Endothelial cell of umbilical vein (primary cell): ENCODE measurements at regions of chr5 and their contacts with region 1.

Region 1: DNA sequence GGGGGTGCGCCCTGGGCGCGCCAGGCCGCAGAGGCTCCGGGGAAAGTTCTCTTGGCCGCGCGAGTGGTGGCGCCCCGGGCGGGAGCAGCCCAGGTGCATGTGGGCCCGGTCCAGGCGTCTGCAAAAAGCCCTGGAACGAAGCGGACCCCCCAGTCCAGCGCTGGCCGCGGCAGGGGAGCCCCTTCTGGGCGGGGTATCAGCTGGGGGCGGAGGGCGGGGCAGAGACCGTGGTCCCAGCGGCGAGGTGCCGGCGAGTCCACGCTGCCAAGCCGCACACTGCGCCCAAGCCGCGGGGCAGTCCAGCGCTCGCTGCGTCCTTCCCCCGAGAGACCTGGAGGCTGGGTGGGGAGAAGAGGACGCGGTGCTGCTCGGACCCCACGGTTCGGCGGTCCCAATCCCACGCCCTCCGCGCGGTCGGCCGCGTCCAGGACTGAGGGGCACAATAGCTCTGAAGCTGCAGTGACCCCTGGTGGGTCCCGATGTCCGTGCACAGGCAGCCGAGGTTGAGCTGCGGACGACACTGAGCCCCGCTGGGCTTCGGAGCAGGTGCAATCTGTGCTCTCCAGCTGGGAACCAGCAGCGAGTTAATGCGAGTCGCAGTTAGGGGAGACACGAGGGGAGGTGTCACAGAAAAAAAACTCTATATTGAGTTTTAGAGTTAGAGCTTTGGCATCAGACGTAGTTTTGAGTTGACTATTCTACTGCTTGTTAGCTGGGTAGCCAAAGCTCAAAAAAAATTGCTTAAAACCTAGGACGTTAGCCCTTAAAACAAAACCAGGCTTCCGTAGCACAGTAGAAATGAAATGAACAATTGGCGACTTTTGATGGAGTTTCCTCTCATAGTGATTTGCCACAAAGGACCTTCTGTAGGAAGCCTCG is 1.1 kb upstream of the EPB41L4A start:
- DNase-seq: peak; percentile 88
- H3K4me3 ChIP-seq: peak overlapping the region; percentile 80 to 97 (median 91)
- H3K27ac ChIP-seq: no peak overlapping the region
- H3K4me1 ChIP-seq: peaks cover 7% of the 10 kb centered on the region
- H3K27me3 ChIP-seq: no peaks in the 10 kb centered on the region
- CTCF ChIP-seq: peak; percentile 92 to 93
- POLR2A ChIP-seq: peak; percentile 10

Region 2: DNA sequence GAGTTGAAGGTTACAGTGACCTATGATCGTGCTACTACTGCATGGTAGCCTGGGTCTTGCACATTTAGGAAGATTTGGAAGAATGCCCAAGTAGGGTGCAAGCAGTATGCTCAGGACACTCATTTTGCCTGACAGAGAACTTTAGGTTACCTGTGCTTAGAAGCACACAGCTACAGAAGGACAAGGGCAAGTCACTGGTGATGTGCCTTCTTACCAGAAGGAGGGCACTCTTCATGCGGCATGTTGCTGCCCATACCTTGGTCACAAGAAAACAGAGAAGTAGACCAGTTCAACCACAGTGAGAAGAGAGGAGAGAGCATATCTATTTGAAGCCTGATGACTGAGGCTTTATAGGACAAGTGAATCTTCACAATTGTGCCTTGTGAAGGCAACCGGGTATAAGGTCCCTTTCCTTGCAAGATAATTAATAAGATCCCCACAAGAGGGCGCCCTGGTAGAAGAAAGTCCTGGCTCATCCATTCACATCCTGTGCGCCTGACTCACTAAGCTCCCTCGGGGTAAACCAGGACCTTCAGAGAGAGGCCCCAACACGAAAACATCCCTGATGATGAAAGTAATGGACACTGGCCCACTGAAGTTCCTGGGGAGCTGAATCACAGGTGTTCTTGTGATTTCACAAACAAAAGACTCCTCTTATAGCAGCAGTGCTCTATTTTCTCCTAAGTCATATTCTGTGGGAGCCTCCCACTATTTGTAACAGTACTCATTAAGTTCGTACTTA is 869.8 kb before region 1 on chr5:
- CTCF ChIA-PET with region 1: no interaction called
- POLR2A ChIA-PET with region 1: no interaction called
- dilution Hi-C with region 1: no loop called
- intact Hi-C with region 1: loop called (anchors 10 kb)
- DNase-seq: peak; percentile 96
- H3K4me3 ChIP-seq: peak overlapping the region in 1 of 3 experiments; percentile 37
- H3K27ac ChIP-seq: peak overlapping the region; percentile 98
- H3K4me1 ChIP-seq: peaks cover 25% of the 10 kb centered on the region
- H3K27me3 ChIP-seq: no peaks in the 10 kb centered on the region
- CTCF ChIP-seq: peak; percentile 51 to 60
- POLR2A ChIP-seq: no peak

Region 3: DNA sequence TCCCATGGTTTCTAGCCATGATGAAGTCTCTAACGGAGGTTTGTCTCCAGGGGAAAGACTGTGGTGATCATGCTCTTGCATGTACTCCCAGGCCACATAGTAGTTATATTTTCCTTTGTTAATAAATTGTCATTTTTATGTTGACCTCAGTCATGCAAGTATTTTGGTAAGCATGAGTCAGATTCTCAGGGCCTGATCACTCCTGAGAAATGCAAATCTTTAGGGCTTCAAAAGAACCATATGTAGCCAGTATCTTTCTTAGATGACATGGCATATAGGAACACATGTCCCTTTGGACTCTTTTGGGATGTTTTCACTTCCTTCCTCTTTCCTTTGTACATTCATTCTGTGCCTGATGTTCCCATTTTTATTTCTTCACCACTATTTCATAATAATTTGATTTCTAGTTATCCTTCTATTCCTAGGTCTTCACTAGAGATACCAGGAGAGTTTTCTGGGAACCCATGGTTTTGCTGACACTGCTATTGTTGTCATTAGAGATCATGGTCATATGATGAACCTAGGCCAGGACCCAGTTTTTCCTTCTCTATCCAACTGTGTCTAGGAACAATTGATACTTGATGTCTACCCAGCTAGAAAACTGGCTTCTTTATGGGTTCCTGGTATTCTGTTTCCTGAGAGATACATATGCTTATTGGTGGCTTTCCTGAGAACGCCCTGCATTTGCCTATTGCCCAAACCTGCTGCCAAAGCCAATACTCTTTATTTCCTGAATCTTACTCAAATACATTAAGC is 415.2 kb before region 1 on chr5:
- CTCF ChIA-PET with region 1: no interaction called
- POLR2A ChIA-PET with region 1: no interaction called
- dilution Hi-C with region 1: no loop called
- intact Hi-C with region 1: no loop called
- DNase-seq: peak; percentile 7
- H3K4me3 ChIP-seq: no peak overlapping the region
- H3K27ac ChIP-seq: no peak overlapping the region
- H3K4me1 ChIP-seq: peaks cover 7% of the 10 kb centered on the region
- H3K27me3 ChIP-seq: no peaks in the 10 kb centered on the region
- CTCF ChIP-seq: no peak
- POLR2A ChIP-seq: no peak

Region 4: DNA sequence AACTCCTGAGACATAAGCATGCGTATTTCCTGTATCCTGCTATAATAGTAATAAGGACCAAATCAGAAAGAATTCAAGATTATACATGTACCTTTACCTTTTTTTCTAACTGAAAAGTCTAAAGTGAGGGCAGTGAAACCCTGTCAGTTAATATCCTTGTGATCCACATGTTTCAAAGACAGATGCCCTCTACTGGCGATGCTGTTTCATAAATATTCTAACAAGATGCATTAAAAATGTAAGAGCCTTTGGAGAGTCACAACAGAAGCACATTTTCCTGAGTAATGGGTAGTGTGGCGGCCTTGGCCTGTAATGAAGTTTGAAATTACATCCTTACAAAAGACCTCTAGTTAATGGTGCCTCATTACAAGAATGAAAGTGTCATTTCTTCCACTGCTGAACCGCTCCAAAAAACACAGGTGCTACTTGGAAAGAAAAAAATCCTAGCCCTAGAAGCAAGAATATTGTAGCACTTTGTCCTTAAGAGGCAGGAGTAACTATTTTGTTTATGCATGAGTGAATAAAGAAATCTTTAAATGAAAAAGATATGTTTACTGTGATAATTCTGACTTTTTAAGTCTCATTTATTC is 233.7 kb before region 1 on chr5:
- CTCF ChIA-PET with region 1: interaction called, 11 read pairs
- POLR2A ChIA-PET with region 1: no interaction called
- dilution Hi-C with region 1: no loop called
- intact Hi-C with region 1: no loop called
- DNase-seq: peak; percentile 44
- H3K4me3 ChIP-seq: no peak overlapping the region
- H3K27ac ChIP-seq: no peak overlapping the region
- H3K4me1 ChIP-seq: no peaks in the 10 kb centered on the region
- H3K27me3 ChIP-seq: no peaks in the 10 kb centered on the region
- CTCF ChIP-seq: peak; percentile 40 to 44
- POLR2A ChIP-seq: no peak

Region 5: DNA sequence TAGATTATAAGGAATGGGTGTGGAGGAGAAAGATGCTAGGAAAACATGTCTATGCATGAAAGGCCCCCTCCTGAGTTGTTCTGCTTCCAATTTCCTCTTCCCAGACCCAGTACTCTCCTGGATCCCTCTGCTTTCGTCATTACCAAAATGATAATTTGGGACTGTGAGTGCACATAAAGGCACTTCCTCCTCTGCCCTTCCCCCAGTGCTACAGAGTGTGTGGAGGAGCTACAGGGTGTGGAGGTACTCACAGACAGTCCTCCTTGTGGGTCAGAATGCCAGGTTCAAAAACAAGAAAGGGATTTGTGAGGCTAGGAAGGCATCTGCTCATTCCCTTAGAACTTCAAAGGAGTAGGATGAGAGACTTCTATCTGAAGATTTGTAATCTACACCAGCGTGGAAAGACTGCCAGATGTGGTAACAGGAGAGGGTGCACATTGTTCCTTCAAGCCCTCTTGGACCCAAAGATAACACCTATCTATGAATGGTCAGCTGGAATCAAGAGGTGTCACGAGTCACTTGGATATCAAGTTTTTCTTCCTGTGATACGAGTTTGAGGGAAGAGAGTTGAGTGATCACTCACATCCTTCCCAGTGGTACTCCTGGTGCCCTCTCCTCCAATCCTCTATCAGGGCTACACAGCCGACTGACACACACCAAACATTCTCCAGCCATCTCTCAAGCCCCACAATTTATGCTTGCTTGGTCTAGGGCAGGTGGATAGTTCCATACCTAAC is 202.2 kb before region 1 on chr5:
- CTCF ChIA-PET with region 1: interaction called, 184 read pairs
- POLR2A ChIA-PET with region 1: no interaction called
- dilution Hi-C with region 1: no loop called
- intact Hi-C with region 1: no loop called
- DNase-seq: no peak
- H3K4me3 ChIP-seq: no peak overlapping the region
- H3K27ac ChIP-seq: no peak overlapping the region
- H3K4me1 ChIP-seq: no peaks in the 10 kb centered on the region
- H3K27me3 ChIP-seq: no peaks in the 10 kb centered on the region
- CTCF ChIP-seq: no peak
- POLR2A ChIP-seq: no peak

Region 6: DNA sequence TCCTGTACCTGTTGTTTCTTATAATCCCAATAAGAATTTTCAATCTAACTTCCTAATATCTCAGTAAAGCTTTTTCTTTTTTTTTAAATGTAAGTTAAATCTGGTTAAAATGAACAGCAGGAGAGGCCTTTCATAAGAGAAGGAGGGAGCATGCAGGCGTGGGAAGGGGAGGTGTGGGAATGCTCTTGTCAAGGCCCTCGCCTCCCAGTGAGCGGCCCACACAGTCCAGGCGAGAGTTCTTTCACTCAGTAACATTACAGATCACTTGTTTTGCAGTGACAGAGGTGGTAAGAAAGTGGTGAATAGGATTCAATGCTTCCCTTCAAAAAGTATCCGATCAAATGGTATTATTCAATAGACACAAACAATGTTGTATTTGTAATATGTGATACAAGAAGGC is 126.1 kb before region 1 on chr5:
- CTCF ChIA-PET with region 1: interaction called, 25 read pairs
- POLR2A ChIA-PET with region 1: no interaction called
- dilution Hi-C with region 1: no loop called
- intact Hi-C with region 1: no loop called
- DNase-seq: no peak
- H3K4me3 ChIP-seq: no peak overlapping the region
- H3K27ac ChIP-seq: no peak overlapping the region
- H3K4me1 ChIP-seq: no peaks in the 10 kb centered on the region
- H3K27me3 ChIP-seq: no peaks in the 10 kb centered on the region
- CTCF ChIP-seq: no peak
- POLR2A ChIP-seq: no peak

Region 7: GRCh38 chr5:112472614-112473013 is 52.4 kb after region 1 on chr5:
- CTCF ChIA-PET with region 1: interaction called, 16 read pairs
- POLR2A ChIA-PET with region 1: no interaction called
- dilution Hi-C with region 1: no loop called
- intact Hi-C with region 1: loop called (anchors 5 kb)
- DNase-seq: peak; percentile 91
- H3K4me3 ChIP-seq: no peak overlapping the region
- H3K27ac ChIP-seq: peak overlapping the region; percentile 33
- H3K4me1 ChIP-seq: peaks cover 20% of the 10 kb centered on the region
- H3K27me3 ChIP-seq: no peaks in the 10 kb centered on the region
- CTCF ChIP-seq: no peak
- POLR2A ChIP-seq: no peak

Region 8: GRCh38 chr5:112757468-112758208 is 337.4 kb after region 1 on chr5:
- CTCF ChIA-PET with region 1: interaction called, 9 read pairs
- POLR2A ChIA-PET with region 1: no interaction called
- dilution Hi-C with region 1: no loop called
- intact Hi-C with region 1: loop called (anchors 2 kb)
- DNase-seq: peak; percentile 78
- H3K4me3 ChIP-seq: no peak overlapping the region
- H3K27ac ChIP-seq: no peak overlapping the region
- H3K4me1 ChIP-seq: peaks cover 3% of the 10 kb centered on the region
- H3K27me3 ChIP-seq: no peaks in the 10 kb centered on the region
- CTCF ChIP-seq: peak; percentile 49 to 50
- POLR2A ChIP-seq: no peak